ENCODE measurements at regions of chr17 and their contacts with region 1.

Region 1: DNA sequence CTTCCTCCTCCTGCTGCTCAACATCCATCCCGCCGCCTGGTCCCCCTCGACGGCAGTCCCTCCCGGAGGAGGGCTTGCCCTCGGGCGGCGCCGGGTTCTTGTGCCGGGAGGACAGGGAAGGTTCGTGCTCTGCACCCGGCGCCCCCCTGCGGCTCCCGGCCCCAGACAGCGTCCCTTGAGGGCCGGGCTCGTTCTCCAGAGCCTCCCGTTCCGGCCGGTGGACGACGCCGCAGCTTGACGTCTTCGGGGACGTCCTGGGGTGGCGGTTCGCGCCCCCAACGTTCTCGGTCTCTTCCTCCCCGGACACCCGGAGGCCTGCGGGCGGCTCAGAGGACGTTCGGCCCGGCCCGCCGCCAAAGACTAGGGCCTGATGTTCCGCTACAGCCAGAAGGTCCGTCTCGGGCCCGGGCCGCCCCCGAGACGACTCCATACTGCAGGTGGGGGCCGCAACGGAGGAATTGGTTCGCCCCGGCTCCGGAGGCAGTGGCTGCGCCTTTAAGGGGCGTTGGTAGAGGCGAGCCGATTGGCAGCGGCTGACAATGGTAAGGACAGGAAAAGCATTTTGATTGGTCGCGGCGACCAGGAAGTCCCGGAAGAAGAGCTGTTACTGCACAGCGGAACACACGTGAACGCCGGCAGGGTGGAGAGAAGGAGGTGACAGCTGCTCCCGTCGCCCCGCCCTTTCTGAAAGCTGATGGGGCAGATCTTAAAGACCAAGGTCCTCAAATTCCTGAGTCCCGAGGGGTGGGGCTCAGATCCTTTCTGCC is at the start of gene BORCS6:
- DNase-seq: peak; percentile 90 to 96
- H3K4me3 ChIP-seq: peak within 1 kb of the TSS; percentile 86
- H3K27ac ChIP-seq: no peak within 1 kb of the TSS
- H3K4me1 ChIP-seq: peaks cover 12% of the 10 kb centered on the region
- H3K27me3 ChIP-seq: no peaks in the 10 kb centered on the region
- CTCF ChIP-seq: no peak
- total RNA-seq, gene BORCS6: 6.4 and 8.0 TPM in 2 replicates

Region 2: DNA sequence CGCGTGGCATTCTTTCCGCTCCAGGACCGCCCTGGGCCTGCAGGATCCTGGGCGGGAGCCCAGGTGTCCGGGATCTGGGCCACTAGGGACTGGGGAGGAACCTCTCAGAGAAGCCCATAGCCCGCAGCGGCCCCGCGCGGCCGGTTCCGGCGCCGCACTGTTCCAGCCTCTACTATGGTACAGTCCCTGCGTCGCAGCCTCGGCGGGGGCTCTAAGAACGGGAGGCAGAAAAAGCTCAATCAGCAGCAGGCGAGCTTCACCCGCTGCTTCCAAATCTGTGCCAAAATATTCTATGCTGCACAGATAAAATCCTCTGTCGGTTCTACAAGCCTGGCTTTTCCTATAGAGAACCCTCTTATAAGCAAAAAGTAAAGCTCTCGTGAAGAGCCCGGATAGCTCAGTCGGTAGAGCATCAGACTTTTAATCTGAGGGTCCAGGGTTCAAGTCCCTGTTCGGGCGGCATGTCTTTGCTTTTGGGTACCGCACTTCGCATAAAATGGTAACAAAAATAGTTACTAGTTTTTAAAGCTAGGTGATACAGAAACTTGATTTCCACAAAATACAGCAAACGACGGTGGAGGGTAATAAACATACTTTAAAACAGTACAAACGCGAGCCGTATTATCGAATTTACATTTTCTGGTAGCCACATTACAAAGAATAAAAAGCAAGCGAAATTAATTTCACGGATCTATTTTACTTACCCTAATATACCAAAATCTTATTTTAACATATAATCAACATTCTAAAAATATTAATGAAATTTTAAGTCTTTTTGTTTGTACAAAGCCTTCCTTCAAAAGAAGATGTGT is 70.9 kb before region 1 on chr17:
- CTCF ChIA-PET with region 1: interaction called, 3 read pairs
- POLR2A ChIA-PET with region 1: no interaction called
- intact Hi-C with region 1: loop called (anchors 1 kb)
- DNase-seq: peak; percentile 67 to 87
- H3K4me3 ChIP-seq: peak overlapping the region; percentile 87
- H3K27ac ChIP-seq: peak overlapping the region; percentile 87
- H3K4me1 ChIP-seq: peaks cover 11% of the 10 kb centered on the region
- H3K27me3 ChIP-seq: no peaks in the 10 kb centered on the region
- CTCF ChIP-seq: peak; percentile 74

Region 3: GRCh38 chr17:8156246-8156992 is 33.5 kb before region 1 on chr17:
- CTCF ChIA-PET with region 1: interaction called, 3 read pairs
- POLR2A ChIA-PET with region 1: interaction called, 4 read pairs
- intact Hi-C with region 1: loop called (anchors 2 kb)
- DNase-seq: peak; percentile 99 to 100
- H3K4me3 ChIP-seq: peak overlapping the region; percentile 60
- H3K27ac ChIP-seq: peak overlapping the region; percentile 82
- H3K4me1 ChIP-seq: peaks cover 25% of the 10 kb centered on the region
- H3K27me3 ChIP-seq: no peaks in the 10 kb centered on the region
- CTCF ChIP-seq: no peak

Region 4: DNA sequence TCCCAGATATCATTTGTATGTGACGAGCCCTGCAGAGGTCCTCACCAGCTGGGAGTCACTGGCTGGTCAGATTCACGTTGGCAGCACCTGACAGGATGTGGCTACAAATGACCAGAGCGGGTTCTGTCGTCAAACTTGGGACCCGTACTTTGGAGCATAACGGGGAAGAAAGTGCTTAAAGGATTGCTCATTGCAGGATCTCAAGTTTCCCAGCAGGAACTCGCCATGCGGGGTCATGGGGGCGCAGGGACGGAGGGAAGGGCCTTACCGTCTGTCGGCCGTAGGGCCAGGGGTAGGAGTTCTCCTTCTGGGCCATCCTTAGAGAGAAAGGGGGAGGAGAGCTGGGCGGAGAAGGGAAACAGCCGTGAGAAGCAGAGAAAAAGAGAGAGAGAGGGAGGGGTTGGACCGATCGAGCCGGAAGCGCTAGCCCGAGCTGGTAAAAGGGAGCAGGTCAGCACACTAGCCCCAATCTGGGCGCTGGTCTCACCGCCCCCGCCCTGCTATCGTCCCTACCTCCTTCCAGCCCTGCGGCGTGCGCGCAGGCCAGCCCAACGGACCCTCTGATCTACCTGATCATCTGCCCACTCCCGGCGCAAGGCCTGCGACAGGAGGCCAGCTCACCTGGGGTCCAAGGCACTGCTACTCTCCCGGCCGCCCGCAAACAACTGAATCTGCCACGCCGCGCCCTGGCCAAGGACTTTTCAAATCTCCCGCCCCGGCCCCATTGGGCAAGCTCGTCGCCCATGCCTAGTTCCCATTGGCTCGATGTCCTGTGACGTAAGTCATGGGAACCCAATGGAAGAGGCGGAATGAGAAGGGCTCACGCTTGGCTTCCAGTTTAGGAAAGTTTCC is 20.2 kb after region 1 on chr17 and contains the start of gene AURKB:
- CTCF ChIA-PET with region 1: no interaction called
- POLR2A ChIA-PET with region 1: interaction called, 18 read pairs
- intact Hi-C with region 1: no loop called
- DNase-seq: peak; percentile 84 to 96
- H3K4me3 ChIP-seq: peak within 1 kb of the TSS; percentile 70
- H3K27ac ChIP-seq: peak within 1 kb of the TSS; percentile 55
- H3K4me1 ChIP-seq: peaks cover 12% of the 10 kb centered on the region
- H3K27me3 ChIP-seq: no peaks in the 10 kb centered on the region
- CTCF ChIP-seq: no peak
- total RNA-seq, gene AURKB: 159 and 167 TPM in 2 replicates

Region 5: GRCh38 chr17:8248751-8249607 is 59.1 kb after region 1 on chr17 and contains the start of gene PFAS:
- CTCF ChIA-PET with region 1: no interaction called
- POLR2A ChIA-PET with region 1: interaction called, 3 read pairs
- intact Hi-C with region 1: loop called (anchors 1 kb)
- DNase-seq: peak; percentile 83 to 96
- H3K4me3 ChIP-seq: peak within 1 kb of the TSS; percentile 99
- H3K27ac ChIP-seq: peak within 1 kb of the TSS; percentile 93
- H3K4me1 ChIP-seq: peaks cover 8% of the 10 kb centered on the region; the same call in 1 of the 2 replicates
- H3K27me3 ChIP-seq: no peaks in the 10 kb centered on the region
- CTCF ChIP-seq: no peak
- total RNA-seq, gene PFAS: 54.5 and 68.2 TPM in 2 replicates

Region 6: DNA sequence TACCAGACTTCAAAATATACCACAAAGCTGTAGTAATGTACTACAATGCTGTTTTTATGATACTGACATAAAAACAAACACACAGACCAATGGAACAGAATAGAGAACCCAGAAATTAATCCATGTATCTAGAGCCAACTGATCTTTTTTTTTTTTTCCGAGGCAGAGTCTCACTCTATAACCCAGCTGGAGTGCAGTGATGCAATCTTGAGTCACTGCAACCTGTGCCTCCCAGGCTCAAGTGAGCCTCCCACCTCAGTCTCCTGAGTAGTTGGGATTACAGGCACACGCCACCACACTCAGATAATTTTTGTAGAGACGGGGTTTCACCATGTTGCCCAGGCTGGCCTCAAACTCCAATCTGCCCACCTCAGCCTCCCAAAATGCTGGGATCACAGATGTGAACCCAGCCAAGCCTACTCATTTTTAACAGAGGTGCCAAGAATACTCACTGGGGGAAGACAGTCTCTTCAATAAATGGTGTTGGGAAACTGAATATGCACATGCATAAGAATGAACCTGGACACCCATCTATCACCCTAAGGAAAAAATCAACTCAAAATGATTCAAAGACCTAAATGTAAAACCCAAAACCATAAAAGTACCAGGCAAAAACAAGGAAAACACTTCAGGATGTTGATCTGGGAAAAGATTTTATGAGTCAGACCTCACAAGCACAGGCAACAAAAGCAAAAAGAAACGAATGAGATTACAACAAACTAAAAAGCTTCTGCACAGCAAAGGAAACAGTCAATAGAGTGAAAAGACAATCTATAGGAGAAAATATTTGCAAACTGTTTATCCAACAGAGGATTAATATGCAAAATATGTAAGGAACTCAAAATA is 1322.7 kb after region 1 on chr17:
- CTCF ChIA-PET with region 1: no interaction called
- POLR2A ChIA-PET with region 1: no interaction called
- intact Hi-C with region 1: no loop called
- DNase-seq: no peak
- H3K4me3 ChIP-seq: no peak overlapping the region
- H3K27ac ChIP-seq: no peak overlapping the region
- H3K4me1 ChIP-seq: no peaks in the 10 kb centered on the region
- H3K27me3 ChIP-seq: no peaks in the 10 kb centered on the region
- CTCF ChIP-seq: no peak